Left lung (tissue), 14 donors: ENCODE measurements at regions of chr3 and their contacts with region 1.

Region 1: GRCh38 chr3:182713743-182714517 is 79.4 kb upstream of the ATP11B start:
- DNase-seq: peak in 2 of 4 donors; percentile 39 to 59
- ATAC-seq: peak; percentile 89
- H3K4me3 ChIP-seq: no peak overlapping the region
- H3K27ac ChIP-seq: no peak overlapping the region
- H3K4me1 ChIP-seq: no peaks in the 10 kb centered on the region
- H3K27me3 ChIP-seq: no peaks in the 10 kb centered on the region
- CTCF ChIP-seq: peak; percentile 39 to 43

Region 2: DNA sequence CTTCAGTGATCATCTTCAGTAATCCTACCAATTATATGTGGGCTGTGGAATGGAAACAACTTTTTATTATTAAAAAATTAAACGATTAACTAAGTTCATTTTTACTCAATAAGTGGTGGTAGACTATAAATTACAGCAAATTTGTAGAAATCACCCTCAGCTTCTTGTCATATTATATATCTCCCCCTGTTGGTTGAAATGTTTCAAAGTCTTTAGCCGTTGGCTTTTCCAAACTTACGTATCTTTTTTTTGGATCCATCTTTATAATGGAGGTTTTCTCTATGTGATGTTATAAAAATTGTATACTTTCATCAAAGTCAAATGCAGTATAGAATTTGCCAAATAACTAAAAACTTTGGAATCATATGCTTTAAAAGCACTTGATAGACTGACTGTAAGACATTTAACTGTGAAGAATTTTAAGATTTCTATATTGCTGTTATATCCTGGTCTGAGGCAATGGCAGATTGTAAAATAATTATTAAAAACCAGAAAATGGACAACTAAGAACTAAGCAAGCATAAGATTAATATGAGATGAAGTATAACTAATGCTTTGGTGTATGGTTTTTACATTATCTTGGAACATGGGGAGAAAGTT is 124.0 kb after region 1 on chr3:
- intact Hi-C with region 1: loop called in 1 of 2 experiments (anchors 5 kb)
- DNase-seq: peak in 1 of 4 donors; percentile 14
- ATAC-seq: peak; percentile 41
- H3K4me3 ChIP-seq: no peak overlapping the region
- H3K27ac ChIP-seq: no peak overlapping the region
- H3K4me1 ChIP-seq: no peaks in the 10 kb centered on the region
- H3K27me3 ChIP-seq: no peaks in the 10 kb centered on the region
- CTCF ChIP-seq: peak; percentile 22 to 34